K562 (cell line): ENCODE measurements at regions of chr19 and their contacts with region 1.

Region 1: GRCh38 chr19:4867534-4868285 is at the start of gene PLIN3:
- DNase-seq: peak; percentile 96 to 100 (median 100)
- ATAC-seq: peak; percentile 92
- H3K4me3 ChIP-seq: peak within 1 kb of the TSS; percentile 59
- H3K27ac ChIP-seq: peak within 1 kb of the TSS; percentile 80
- H3K4me1 ChIP-seq: peaks cover 16 to 35% of the 10 kb centered on the region in 2 experiments
- H3K27me3 ChIP-seq: no peaks in the 10 kb centered on the region
- CTCF ChIP-seq: no peak
- EP300 ChIP-seq: no peak
- POLR2A ChIP-seq: peak; percentile 67; the same call in 1 of the 2 replicates
- RAD21 ChIP-seq: no peak
- polyA plus RNA-seq, gene PLIN3: 7.5 to 9.8 TPM

Region 2: DNA sequence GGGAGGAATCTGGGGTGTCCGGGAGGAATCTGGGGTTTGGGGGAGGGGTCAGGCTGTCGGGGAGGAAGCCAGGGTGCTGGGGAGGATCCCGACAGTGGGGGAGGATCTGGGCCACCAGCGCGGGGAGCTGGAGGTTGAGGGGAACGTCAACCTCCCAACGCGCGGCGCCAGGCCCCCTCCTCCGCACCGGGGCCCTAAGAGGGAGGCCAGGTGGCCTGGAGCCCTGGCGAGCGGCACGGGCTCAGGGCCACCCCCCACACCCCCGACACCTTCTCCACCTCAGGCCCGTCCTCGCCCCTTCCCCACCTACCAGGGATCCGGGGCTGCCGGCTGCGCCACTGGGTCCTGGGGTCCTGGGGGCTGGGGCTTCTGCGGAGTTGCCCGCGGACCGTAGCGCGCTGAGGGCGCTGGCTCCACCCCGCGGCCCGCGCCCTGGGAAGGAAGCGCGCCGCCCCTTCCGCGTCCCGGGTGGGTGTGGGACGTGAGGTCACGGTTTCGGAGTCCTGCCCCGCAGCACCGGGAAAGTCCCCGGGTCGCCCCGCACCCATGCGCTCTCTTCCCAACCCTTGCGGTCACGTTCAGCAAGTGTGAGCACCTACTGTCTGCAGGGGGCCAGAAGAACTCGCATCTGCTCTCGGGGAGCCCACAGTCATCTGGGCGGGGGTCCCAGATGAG is 36.3 kb before region 1 on chr19 and contains the start of gene TICAM1:
- CTCF ChIA-PET with region 1: no interaction called
- POLR2A ChIA-PET with region 1: no interaction called
- in situ Hi-C with region 1: no loop called
- intact Hi-C with region 1: no loop called
- DNase-seq: peak; percentile 78 to 90 (median 85)
- ATAC-seq: peak; percentile 93
- H3K4me3 ChIP-seq: peak within 1 kb of the TSS; percentile 98
- H3K27ac ChIP-seq: peak within 1 kb of the TSS; percentile 90
- H3K4me1 ChIP-seq: peaks cover 7 to 15% of the 10 kb centered on the region in 2 experiments; a peak in 4 of 5 replicates
- H3K27me3 ChIP-seq: no peaks in the 10 kb centered on the region
- CTCF ChIP-seq: 0 out of 6 replicates have a peak, but pooled peaks of 1 of the 3 experiments have one; percentile 10
- EP300 ChIP-seq: no peak
- POLR2A ChIP-seq: peak; percentile 81
- RAD21 ChIP-seq: no peak
- polyA plus RNA-seq, gene TICAM1: 0.07 to 0.11 TPM

Region 3: GRCh38 chr19:4909897-4910593 is 42.3 kb after region 1 on chr19:
- CTCF ChIA-PET with region 1: interaction called, 4 read pairs
- POLR2A ChIA-PET with region 1: interaction called, 3 read pairs
- in situ Hi-C with region 1: no loop called
- intact Hi-C with region 1: loop called (anchors 1 kb)
- DNase-seq: peak; percentile 96 to 98 (median 96)
- ATAC-seq: peak; percentile 94
- H3K4me3 ChIP-seq: peak overlapping the region; percentile 93
- H3K27ac ChIP-seq: peak overlapping the region; percentile 87
- H3K4me1 ChIP-seq: peaks cover 33 to 46% of the 10 kb centered on the region in 2 experiments
- H3K27me3 ChIP-seq: no peaks in the 10 kb centered on the region
- CTCF ChIP-seq: no peak
- EP300 ChIP-seq: no peak
- POLR2A ChIP-seq: no peak
- RAD21 ChIP-seq: no peak